ENCODE measurements at regions of chr2 and their contacts with region 1.

Region 1: GRCh38 chr2:11404376-11405073 is 60.1 kb upstream of the ROCK2 start:
- DNase-seq: no peak
- ATAC-seq: peak in 3 of 8 donors; percentile 28 to 46 (median 35)
- H3K4me3 ChIP-seq: no peak overlapping the region
- H3K27ac ChIP-seq: peak overlapping the region; percentile 34 to 89 (median 81)
- H3K4me1 ChIP-seq: peaks cover 0 to 49% (median 25%) of the 10 kb centered on the region in 9 donors
- H3K27me3 ChIP-seq: no peaks in the 10 kb centered on the region
- CTCF ChIP-seq: no peak

Region 2: DNA sequence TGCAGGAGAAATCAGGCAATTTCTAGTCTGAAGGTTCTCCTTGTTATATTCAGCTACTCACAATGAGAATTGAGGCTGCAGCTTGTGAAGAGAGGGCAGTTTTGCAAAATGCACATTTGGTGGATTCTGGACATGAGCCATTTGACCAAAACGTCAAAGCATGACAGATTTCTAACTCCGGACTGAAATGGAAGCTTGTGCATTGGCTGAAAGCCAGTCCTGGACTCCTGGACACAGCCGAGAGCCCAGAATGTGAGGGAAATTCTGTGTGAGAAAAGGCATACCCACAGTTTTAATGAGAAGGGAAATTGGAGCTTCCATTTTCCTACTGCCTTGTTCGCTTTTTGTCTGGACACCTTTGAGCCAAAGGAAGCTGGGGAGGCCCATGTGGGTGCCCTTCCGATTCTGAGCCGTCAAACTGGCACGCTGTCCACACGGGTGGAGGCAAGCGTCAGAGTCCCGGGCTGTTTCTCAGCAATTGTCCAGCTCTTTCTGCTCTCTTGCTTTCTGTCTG is 36.4 kb before region 1 on chr2:
- intact Hi-C with region 1: loop called in 1 of 10 experiments (anchors 5 kb)
- DNase-seq: peak in 1 of 2 donors; percentile 43
- ATAC-seq: peak in 7 of 8 donors; percentile 46 to 80 (median 68)
- H3K4me3 ChIP-seq: peak overlapping the region in 6 of 10 donors; percentile 16 to 35 (median 26)
- H3K27ac ChIP-seq: peak overlapping the region in 9 of 10 donors; percentile 57 to 82 (median 67)
- H3K4me1 ChIP-seq: peaks cover 3 to 30% (median 14%) of the 10 kb centered on the region in 9 donors
- H3K27me3 ChIP-seq: no peaks in the 10 kb centered on the region
- CTCF ChIP-seq: no peak

Region 3: DNA sequence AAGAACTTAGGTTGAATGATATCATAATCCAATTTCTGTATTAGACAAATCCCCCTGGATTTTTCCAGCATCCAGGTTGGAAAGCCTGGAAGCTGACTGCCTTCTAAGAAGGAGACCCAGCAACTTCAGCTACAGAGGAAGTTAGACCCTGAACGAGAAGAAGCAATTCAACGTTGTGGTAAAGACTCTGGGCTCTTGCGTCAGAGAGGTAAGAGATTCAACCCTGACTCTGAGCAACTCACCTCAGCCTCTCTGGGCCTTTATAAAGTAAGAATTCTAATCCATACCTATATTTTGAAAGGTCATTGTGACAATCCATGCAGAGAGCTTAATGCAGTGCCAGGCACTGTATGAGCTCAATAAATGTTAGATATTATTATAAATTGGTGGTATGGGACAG is 51.7 kb after region 1 on chr2:
- intact Hi-C with region 1: no loop called
- DNase-seq: no peak
- ATAC-seq: no peak
- H3K4me3 ChIP-seq: no peak overlapping the region
- H3K27ac ChIP-seq: no peak overlapping the region
- H3K4me1 ChIP-seq: peaks cover 0 to 46% (median 29%) of the 10 kb centered on the region in 9 donors
- H3K27me3 ChIP-seq: no peaks in the 10 kb centered on the region
- CTCF ChIP-seq: no peak

Measured in heart right ventricle (tissue), 16 donors.